Upper lobe of right lung (tissue), 1 donor: ENCODE measurements at regions of chr2 and their contacts with region 1.

Region 1: DNA sequence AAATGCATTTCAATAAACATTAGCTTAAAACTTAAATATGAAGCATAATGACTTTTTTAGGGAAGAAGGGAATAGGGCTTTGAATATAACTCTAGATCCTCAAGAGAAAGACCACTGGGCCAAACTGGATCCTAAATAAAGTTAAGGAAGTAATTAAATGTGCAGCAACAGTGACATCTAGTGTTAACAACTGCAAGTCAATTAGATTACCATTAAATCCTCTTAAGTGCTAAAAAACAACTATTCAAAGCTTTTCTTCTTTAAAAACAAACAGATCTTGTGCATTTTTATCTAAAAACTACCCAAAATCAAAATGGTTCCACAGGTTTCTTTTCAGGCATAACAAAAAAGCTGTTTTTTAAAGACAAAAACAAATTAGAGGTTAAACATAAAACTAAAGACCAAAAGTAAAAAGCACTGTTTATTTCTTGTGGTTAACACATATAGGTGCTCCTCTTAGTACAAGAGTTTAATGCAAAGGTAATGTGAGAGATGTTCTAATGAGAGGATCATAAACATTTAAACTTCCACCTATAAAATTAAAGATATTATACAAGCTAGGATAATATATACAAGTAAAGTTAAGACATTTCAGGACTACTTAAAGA is 111.4 kb downstream of the THADA start:
- DNase-seq: no peak
- ATAC-seq: peak; percentile 75
- H3K4me3 ChIP-seq: no peak overlapping the region
- H3K27ac ChIP-seq: no peak overlapping the region
- H3K4me1 ChIP-seq: peaks cover 23% of the 10 kb centered on the region
- H3K27me3 ChIP-seq: no peaks in the 10 kb centered on the region
- CTCF ChIP-seq: peak; percentile 71

Region 2: GRCh38 chr2:42944779-42945415 is 539.5 kb before region 1 on chr2:
- intact Hi-C with region 1: loop called (anchors 5 kb)
- DNase-seq: no peak
- ATAC-seq: no peak
- H3K4me3 ChIP-seq: no peak overlapping the region
- H3K27ac ChIP-seq: no peak overlapping the region
- H3K4me1 ChIP-seq: peaks cover 25% of the 10 kb centered on the region
- H3K27me3 ChIP-seq: no peaks in the 10 kb centered on the region
- CTCF ChIP-seq: no peak

Region 3: GRCh38 chr2:42974721-42975717 is 509.4 kb before region 1 on chr2:
- intact Hi-C with region 1: loop called (anchors 10 kb)
- DNase-seq: peak; percentile 85
- ATAC-seq: peak; percentile 88
- H3K4me3 ChIP-seq: peak overlapping the region; percentile 32
- H3K27ac ChIP-seq: peak overlapping the region; percentile 65
- H3K4me1 ChIP-seq: peaks cover 15% of the 10 kb centered on the region
- H3K27me3 ChIP-seq: no peaks in the 10 kb centered on the region
- CTCF ChIP-seq: peak; percentile 83

Region 4: GRCh38 chr2:42987112-42987922 is 497.1 kb before region 1 on chr2:
- intact Hi-C with region 1: no loop called
- DNase-seq: no peak
- ATAC-seq: no peak
- H3K4me3 ChIP-seq: no peak overlapping the region
- H3K27ac ChIP-seq: no peak overlapping the region
- H3K4me1 ChIP-seq: no peaks in the 10 kb centered on the region
- H3K27me3 ChIP-seq: no peaks in the 10 kb centered on the region
- CTCF ChIP-seq: no peak

Region 5: GRCh38 chr2:43239981-43240761 is 244.3 kb before region 1 on chr2:
- intact Hi-C with region 1: loop called (anchors 10 kb)
- DNase-seq: no peak
- ATAC-seq: peak; percentile 38
- H3K4me3 ChIP-seq: no peak overlapping the region
- H3K27ac ChIP-seq: peak overlapping the region; percentile 49
- H3K4me1 ChIP-seq: peaks cover 10% of the 10 kb centered on the region
- H3K27me3 ChIP-seq: no peaks in the 10 kb centered on the region
- CTCF ChIP-seq: no peak